ENCODE measurements at regions of chr2 and their contacts with region 1.

Region 1: GRCh38 chr2:128232965-128233789 is 85.5 kb downstream of the HS6ST1 start:
- DNase-seq: peak; percentile 58 to 89
- H3K4me3 ChIP-seq: peak overlapping the region; percentile 75
- H3K27ac ChIP-seq: no peak overlapping the region
- H3K4me1 ChIP-seq: no peaks in the 10 kb centered on the region
- H3K27me3 ChIP-seq: no peaks in the 10 kb centered on the region
- CTCF ChIP-seq: peak; percentile 95

Region 2: GRCh38 chr2:128134573-128134972 is 98.6 kb before region 1 on chr2:
- CTCF ChIA-PET with region 1: no interaction called
- POLR2A ChIA-PET with region 1: no interaction called
- intact Hi-C with region 1: no loop called
- DNase-seq: no peak
- H3K4me3 ChIP-seq: no peak overlapping the region
- H3K27ac ChIP-seq: no peak overlapping the region
- H3K4me1 ChIP-seq: no peaks in the 10 kb centered on the region
- H3K27me3 ChIP-seq: no peaks in the 10 kb centered on the region
- CTCF ChIP-seq: no peak

Region 3: GRCh38 chr2:128250229-128251025 is 17.2 kb after region 1 on chr2:
- CTCF ChIA-PET with region 1: no interaction called
- POLR2A ChIA-PET with region 1: no interaction called
- intact Hi-C with region 1: no loop called
- DNase-seq: no peak
- H3K4me3 ChIP-seq: no peak overlapping the region
- H3K27ac ChIP-seq: no peak overlapping the region
- H3K4me1 ChIP-seq: no peaks in the 10 kb centered on the region
- H3K27me3 ChIP-seq: no peaks in the 10 kb centered on the region
- CTCF ChIP-seq: no peak

Region 4: GRCh38 chr2:128260239-128261138 is 27.3 kb after region 1 on chr2:
- CTCF ChIA-PET with region 1: no interaction called
- POLR2A ChIA-PET with region 1: no interaction called
- intact Hi-C with region 1: loop called (anchors 2 kb)
- DNase-seq: peak; percentile 73 to 74
- H3K4me3 ChIP-seq: peak overlapping the region; percentile 7; the same call in 1 of the 2 replicates
- H3K27ac ChIP-seq: no peak overlapping the region
- H3K4me1 ChIP-seq: no peaks in the 10 kb centered on the region
- H3K27me3 ChIP-seq: no peaks in the 10 kb centered on the region
- CTCF ChIP-seq: no peak

Region 5: GRCh38 chr2:128310094-128310716 is 77.0 kb after region 1 on chr2:
- CTCF ChIA-PET with region 1: no interaction called
- POLR2A ChIA-PET with region 1: no interaction called
- intact Hi-C with region 1: no loop called
- DNase-seq: no peak
- H3K4me3 ChIP-seq: no peak overlapping the region
- H3K27ac ChIP-seq: no peak overlapping the region
- H3K4me1 ChIP-seq: peaks cover 23% of the 10 kb centered on the region
- H3K27me3 ChIP-seq: no peaks in the 10 kb centered on the region
- CTCF ChIP-seq: no peak

Region 6: GRCh38 chr2:128868686-128869551 is 635.7 kb after region 1 on chr2:
- CTCF ChIA-PET with region 1: no interaction called
- POLR2A ChIA-PET with region 1: no interaction called
- intact Hi-C with region 1: no loop called
- DNase-seq: no peak
- H3K4me3 ChIP-seq: no peak overlapping the region
- H3K27ac ChIP-seq: no peak overlapping the region
- H3K4me1 ChIP-seq: no peaks in the 10 kb centered on the region
- H3K27me3 ChIP-seq: peaks cover 25% of the 10 kb centered on the region
- CTCF ChIP-seq: no peak

Measured in PC-9 (cell line).